ENCODE measurements at regions of chr1 and their contacts with region 1.

Region 1: GRCh38 chr1:150629115-150629928 is at the start of gene ENSA:
- DNase-seq: peak; percentile 84
- ATAC-seq: peak; percentile 88
- H3K4me3 Mint-ChIP-seq: no peak within 1 kb of the TSS
- H3K27ac Mint-ChIP-seq: no peak within 1 kb of the TSS
- H3K4me1 Mint-ChIP-seq: peaks cover 21% of the 10 kb centered on the region
- H3K27me3 Mint-ChIP-seq: no peaks in the 10 kb centered on the region
- CTCF ChIP-seq: no peak
- total RNA-seq, gene ENSA: 202 and 227 TPM in 2 replicates

Region 2: GRCh38 chr1:150321826-150322166 is 307.5 kb before region 1 on chr1:
- CTCF ChIA-PET with region 1: no interaction called
- POLR2A ChIA-PET with region 1: no interaction called
- intact Hi-C with region 1: loop called (anchors 1 kb)
- DNase-seq: no peak
- ATAC-seq: no peak
- H3K4me3 Mint-ChIP-seq: peak overlapping the region; percentile 100
- H3K27ac Mint-ChIP-seq: peak overlapping the region; percentile 99
- H3K4me1 Mint-ChIP-seq: peaks cover 22% of the 10 kb centered on the region
- H3K27me3 Mint-ChIP-seq: peaks cover 2% of the 10 kb centered on the region
- CTCF ChIP-seq: no peak

Region 3: DNA sequence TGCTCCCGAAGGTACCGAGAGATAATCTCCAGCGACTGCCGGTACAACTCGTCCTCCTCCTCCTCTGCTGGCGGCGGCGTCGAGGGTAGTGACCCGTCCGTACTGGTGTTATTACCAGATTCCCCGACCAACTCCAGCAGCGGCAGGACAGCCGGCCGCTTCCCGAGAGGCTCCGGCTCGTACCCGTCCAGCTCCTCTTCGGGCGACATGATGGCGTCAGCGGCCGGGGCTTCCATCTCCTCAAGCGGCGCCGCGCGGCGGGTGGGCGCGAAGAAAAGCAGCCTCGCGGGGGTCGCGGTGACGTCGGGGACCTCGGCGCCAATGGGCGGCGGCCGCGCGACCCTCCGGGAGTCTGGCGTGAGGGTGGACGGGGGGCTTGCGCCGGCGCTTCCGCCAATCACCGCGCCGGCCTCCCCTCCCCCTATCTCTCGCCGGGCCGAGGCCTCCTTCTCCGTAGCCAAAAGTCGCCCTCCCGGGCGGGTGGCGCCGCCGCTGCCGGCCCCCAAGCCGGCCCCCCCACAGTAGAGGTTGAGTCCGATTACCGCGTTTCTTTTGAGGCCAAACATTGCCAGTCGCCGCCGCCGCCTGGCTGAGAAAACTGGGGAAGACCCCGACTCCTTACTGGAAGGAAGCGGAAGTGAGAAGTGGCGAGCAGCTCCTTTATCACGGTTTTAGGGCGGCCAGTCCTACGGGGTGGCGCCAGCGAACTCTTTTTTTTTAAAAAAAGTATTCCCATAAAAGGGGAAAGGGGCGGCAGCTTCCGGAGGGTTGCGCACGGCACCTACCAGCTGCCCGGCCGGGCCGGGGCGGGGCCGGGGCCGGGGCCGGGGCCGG is 50.1 kb before region 1 on chr1 and contains the start of gene MCL1:
- CTCF ChIA-PET with region 1: interaction called, 3 read pairs
- POLR2A ChIA-PET with region 1: interaction called, 64 read pairs
- intact Hi-C with region 1: loop called (anchors 1 kb)
- DNase-seq: peak; percentile 81
- ATAC-seq: peak; percentile 82
- H3K4me3 Mint-ChIP-seq: peak within 1 kb of the TSS; percentile 95
- H3K27ac Mint-ChIP-seq: peak within 1 kb of the TSS; percentile 98
- H3K4me1 Mint-ChIP-seq: peaks cover 49% of the 10 kb centered on the region
- H3K27me3 Mint-ChIP-seq: no peaks in the 10 kb centered on the region
- CTCF ChIP-seq: no peak
- total RNA-seq, gene MCL1: 224 and 233 TPM in 2 replicates

Region 4: DNA sequence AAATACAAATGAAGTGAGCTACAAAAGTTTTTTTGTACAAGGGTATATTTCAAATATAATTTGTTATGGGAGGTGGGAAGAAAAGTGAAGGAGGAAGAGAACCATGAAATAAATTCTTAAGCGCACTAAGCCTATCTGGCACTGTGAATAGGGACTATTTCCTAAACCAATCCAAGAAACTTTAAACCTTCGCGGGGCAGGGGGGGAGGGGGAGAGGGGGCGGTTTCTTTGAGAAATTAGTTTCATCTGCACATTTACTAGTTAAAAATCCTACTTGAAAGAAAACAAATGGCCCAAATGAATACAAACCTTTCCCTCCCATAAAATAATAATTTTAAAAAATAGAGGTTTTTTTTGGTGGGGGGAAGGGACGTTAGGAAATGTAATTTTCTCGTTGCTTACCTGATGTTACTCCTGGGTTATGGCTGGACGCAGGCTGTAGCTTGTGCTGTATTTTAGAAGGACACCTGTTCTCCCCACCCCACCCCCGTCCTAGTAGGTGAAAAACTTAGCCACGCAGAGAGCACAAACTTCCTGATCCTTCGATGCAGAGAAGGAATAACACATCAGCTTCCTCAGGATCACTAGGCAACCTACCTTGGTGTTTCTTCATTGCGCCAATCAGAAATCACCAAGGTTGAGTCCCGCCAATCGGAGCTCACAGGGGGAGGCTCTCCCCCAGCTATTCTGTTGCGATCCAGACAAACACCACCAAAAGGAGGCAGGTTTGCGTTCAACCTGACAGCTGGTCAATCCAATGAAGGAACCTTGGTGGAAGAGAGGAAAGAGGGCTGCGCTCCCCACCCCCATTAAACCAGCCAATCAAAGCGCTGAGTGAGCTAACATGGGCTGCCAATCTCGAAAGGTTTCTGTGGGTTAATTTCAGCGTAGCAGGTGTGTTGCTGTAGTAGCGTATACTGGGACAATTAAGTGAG is 67.5 kb after region 1 on chr1 and contains the start of gene GOLPH3L:
- CTCF ChIA-PET with region 1: no interaction called
- POLR2A ChIA-PET with region 1: interaction called, 16 read pairs
- intact Hi-C with region 1: loop called (anchors 2 kb)
- DNase-seq: peak; percentile 63
- ATAC-seq: peak; percentile 99
- H3K4me3 Mint-ChIP-seq: peak within 1 kb of the TSS; percentile 99
- H3K27ac Mint-ChIP-seq: peak within 1 kb of the TSS; percentile 96
- H3K4me1 Mint-ChIP-seq: peaks cover 23% of the 10 kb centered on the region
- H3K27me3 Mint-ChIP-seq: no peaks in the 10 kb centered on the region
- CTCF ChIP-seq: no peak
- total RNA-seq, gene GOLPH3L: 19.7 and 22.5 TPM in 2 replicates

Region 5: GRCh38 chr1:151281969-151282882 is 652.9 kb after region 1 on chr1 and contains the start of gene ZNF687:
- CTCF ChIA-PET with region 1: no interaction called
- POLR2A ChIA-PET with region 1: no interaction called
- intact Hi-C with region 1: loop called (anchors 5 kb)
- DNase-seq: peak; percentile 96
- ATAC-seq: peak; percentile 88
- H3K4me3 Mint-ChIP-seq: peak within 1 kb of the TSS; percentile 99
- H3K27ac Mint-ChIP-seq: peak within 1 kb of the TSS; percentile 99
- H3K4me1 Mint-ChIP-seq: peaks cover 54% of the 10 kb centered on the region
- H3K27me3 Mint-ChIP-seq: no peaks in the 10 kb centered on the region
- CTCF ChIP-seq: no peak
- total RNA-seq, gene ZNF687: 38.8 and 40.3 TPM in 2 replicates